ENCODE measurements at regions of chr11 and their contacts with region 1.

Region 1: GRCh38 chr11:45322891-45323600 is 36.9 kb upstream of the SYT13 start:
- ATAC-seq: no peak
- H3K4me3 ChIP-seq: no peak overlapping the region
- H3K27ac ChIP-seq: no peak overlapping the region
- H3K4me1 ChIP-seq: no peaks in the 10 kb centered on the region

Region 2: GRCh38 chr11:44574610-44575287 is 748.3 kb before region 1 on chr11:
- in situ Hi-C with region 1: loop called in 1 of 9 experiments (anchors 25 kb)
- ATAC-seq: peak in 2 of 8 experiments; percentile 67 to 75
- H3K4me3 ChIP-seq: no peak overlapping the region
- H3K27ac ChIP-seq: no peak overlapping the region
- H3K4me1 ChIP-seq: peaks cover 0 to 8% of the 10 kb centered on the region in 2 donors

Region 3: DNA sequence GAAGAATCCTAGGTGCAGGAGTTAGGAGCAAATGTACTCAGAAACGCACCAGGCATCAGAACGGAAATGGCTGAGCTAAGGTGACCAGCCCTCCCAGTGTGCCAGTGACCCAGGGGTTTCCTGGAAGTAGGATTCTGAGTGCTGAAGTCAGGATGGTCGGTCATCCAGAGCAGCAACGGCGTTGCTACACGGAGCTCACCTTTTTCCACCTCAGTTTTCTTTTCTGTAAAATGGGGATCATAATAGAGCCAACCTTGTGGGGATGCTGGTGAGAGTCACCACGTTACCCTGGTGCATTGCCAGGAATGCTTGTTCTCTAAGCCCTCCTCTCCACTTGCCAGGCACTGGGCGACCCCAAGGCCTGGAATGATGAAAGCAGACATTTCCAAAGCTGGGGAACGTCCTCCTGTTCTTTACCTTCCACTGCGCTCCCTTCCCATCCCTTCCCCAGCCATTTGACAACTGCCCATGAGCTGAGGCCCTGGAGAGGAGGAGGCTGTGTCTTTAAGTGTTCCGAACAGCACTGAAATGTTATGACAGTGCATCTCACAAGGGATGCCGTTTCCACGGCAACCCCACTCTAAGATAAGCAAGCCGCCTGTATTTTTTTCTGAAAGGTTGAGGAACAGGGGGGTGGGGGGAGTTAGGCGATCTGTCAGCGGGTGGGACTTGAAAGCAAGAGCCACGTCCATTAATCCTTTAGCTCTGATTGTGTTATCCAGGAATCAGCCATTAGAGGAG is 529.5 kb before region 1 on chr11:
- in situ Hi-C with region 1: no loop called
- ATAC-seq: peak in 5 of 8 experiments; percentile 86 to 92 (median 92)
- H3K4me3 ChIP-seq: no peak overlapping the region
- H3K27ac ChIP-seq: peak overlapping the region in 1 of 2 donors; percentile 61
- H3K4me1 ChIP-seq: peaks cover 56 to 72% of the 10 kb centered on the region in 2 donors

Region 4: GRCh38 chr11:45371251-45372115 is 48.4 kb after region 1 on chr11:
- in situ Hi-C with region 1: no loop called
- ATAC-seq: peak; percentile 78 to 97 (median 85)
- H3K4me3 ChIP-seq: peak overlapping the region in 3 of 5 donors; percentile 6 to 8 (median 7)
- H3K27ac ChIP-seq: peak overlapping the region; percentile 40 to 75
- H3K4me1 ChIP-seq: peaks cover 35 to 40% of the 10 kb centered on the region in 2 donors

Region 5: GRCh38 chr11:45501392-45502225 is 178.6 kb after region 1 on chr11:
- in situ Hi-C with region 1: no loop called
- ATAC-seq: peak in 6 of 8 experiments; percentile 61 to 88 (median 86)
- H3K4me3 ChIP-seq: no peak overlapping the region
- H3K27ac ChIP-seq: peak overlapping the region; percentile 90 to 93
- H3K4me1 ChIP-seq: peaks cover 39 to 43% of the 10 kb centered on the region in 2 donors